Activated B cell treated with CpG ODN at 0.5 μM for 24 hours (primary cell): ENCODE measurements at regions of chr2 and their contacts with region 1.

Region 1: GRCh38 chr2:68185541-68186164 is 28.0 kb downstream of the PNO1 start:
- DNase-seq: peak; percentile 45
- ATAC-seq: peak; percentile 57
- H3K4me3 Mint-ChIP-seq: no peak overlapping the region
- H3K27ac Mint-ChIP-seq: no peak overlapping the region
- H3K4me1 Mint-ChIP-seq: peaks cover 23% of the 10 kb centered on the region
- H3K27me3 Mint-ChIP-seq: no peaks in the 10 kb centered on the region
- CTCF ChIP-seq: no peak

Region 2: DNA sequence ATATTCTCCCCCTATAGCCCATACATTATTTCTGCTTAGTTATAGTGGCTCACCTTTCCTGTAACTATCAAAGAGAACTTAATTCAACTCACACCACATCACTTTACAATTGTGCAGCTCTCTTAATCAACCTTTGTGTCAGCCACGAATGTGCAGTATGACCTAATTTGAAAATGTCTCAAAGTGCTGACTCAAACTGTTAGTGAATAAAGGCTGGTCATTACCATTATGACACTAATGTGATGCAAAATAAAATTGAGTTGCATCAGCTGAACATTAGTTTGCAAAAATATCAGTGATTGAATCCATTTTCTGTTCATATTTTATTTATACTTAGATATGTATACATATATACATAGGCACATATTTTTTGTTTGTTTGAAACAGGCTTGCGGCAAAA is 1498.9 kb before region 1 on chr2:
- CTCF ChIA-PET with region 1: no interaction called
- POLR2A ChIA-PET with region 1: no interaction called
- intact Hi-C with region 1: no loop called
- DNase-seq: no peak
- ATAC-seq: no peak
- H3K4me3 Mint-ChIP-seq: no peak overlapping the region
- H3K27ac Mint-ChIP-seq: no peak overlapping the region
- H3K4me1 Mint-ChIP-seq: no peaks in the 10 kb centered on the region
- H3K27me3 Mint-ChIP-seq: peaks cover 2% of the 10 kb centered on the region
- CTCF ChIP-seq: no peak

Region 3: DNA sequence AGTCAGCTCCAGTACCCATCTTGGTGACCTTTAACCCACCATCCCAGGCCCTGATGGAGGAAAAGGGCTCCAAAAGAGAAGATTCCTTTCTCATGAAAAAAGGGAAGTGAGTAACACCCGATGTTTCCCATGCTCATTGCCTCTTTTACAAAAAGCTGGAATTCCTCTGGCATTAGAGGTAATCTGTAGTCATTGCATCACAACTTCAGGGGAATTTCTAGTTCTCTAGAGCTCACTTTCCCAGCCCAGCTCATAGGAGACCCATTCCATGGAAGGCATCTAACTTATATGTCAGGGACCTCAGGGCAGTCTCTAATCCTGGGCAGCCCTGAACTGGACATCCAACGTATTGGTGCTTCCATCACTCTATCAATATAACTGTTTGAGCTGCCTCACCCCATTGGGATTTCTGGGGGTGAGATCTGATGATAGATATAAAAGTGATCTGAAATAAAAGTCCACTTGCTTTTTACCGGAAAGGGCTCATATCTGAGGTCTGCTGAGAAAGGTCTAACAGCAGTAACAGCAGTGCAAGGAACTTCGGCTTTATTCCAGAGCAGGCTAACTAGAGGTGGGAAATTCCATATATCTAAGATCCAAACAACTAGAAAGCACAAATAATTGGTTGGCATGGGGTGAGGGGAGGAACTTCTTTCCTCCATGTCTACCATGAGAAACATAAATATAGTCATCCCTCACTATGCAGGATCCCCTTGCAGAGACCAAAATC is 682.4 kb before region 1 on chr2:
- CTCF ChIA-PET with region 1: no interaction called
- POLR2A ChIA-PET with region 1: no interaction called
- intact Hi-C with region 1: no loop called
- DNase-seq: no peak
- ATAC-seq: no peak
- H3K4me3 Mint-ChIP-seq: no peak overlapping the region
- H3K27ac Mint-ChIP-seq: no peak overlapping the region
- H3K4me1 Mint-ChIP-seq: no peaks in the 10 kb centered on the region
- H3K27me3 Mint-ChIP-seq: no peaks in the 10 kb centered on the region
- CTCF ChIP-seq: no peak

Region 4: GRCh38 chr2:68151037-68151436 is 34.6 kb before region 1 on chr2:
- CTCF ChIA-PET with region 1: no interaction called
- POLR2A ChIA-PET with region 1: no interaction called
- intact Hi-C with region 1: loop called (anchors 5 kb)
- DNase-seq: no peak
- ATAC-seq: no peak
- H3K4me3 Mint-ChIP-seq: no peak overlapping the region
- H3K27ac Mint-ChIP-seq: peak overlapping the region; percentile 37
- H3K4me1 Mint-ChIP-seq: peaks cover 34% of the 10 kb centered on the region
- H3K27me3 Mint-ChIP-seq: no peaks in the 10 kb centered on the region
- CTCF ChIP-seq: no peak

Region 5: DNA sequence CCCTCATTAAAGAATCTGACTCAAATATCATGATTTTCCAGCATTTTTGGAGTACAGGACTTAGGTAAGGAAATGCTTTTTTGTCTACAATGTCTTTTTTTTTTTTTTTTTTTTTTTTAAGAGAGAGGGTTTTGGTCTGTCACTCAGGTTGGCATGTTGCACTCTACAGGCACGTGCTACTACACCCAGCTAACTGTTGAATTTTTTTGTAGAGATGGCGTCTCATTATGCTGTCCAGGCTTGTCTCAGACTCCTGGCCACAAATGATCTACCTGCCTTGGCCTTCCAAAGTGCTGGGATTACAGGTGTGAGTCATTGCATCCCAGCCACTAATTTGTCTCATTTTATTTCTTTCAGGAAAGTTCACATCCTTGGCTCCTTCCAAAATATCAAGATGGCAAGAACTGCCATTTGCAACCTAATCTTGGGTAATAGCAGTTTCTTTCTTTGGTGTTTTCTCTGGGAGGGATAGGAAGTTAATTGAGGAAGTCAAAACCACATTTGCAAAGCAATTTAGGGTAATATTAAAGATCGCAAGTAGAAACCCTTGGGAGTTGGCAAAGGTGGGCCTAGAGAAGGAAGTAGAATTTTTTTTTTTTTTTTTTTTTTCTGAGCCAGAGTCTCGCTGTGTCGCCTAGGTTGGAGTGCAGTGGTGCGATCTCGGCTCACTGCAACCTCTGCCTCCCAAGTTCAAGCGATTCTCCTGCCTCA is 12.5 kb before region 1 on chr2:
- CTCF ChIA-PET with region 1: interaction called, 6 read pairs
- POLR2A ChIA-PET with region 1: no interaction called
- intact Hi-C with region 1: loop called (anchors 2 kb)
- DNase-seq: no peak
- ATAC-seq: peak; percentile 58
- H3K4me3 Mint-ChIP-seq: peak overlapping the region; percentile 41
- H3K27ac Mint-ChIP-seq: peak overlapping the region; percentile 41
- H3K4me1 Mint-ChIP-seq: peaks cover 33% of the 10 kb centered on the region
- H3K27me3 Mint-ChIP-seq: no peaks in the 10 kb centered on the region
- CTCF ChIP-seq: no peak